CD8-positive, alpha-beta memory T cell (primary cell): ENCODE measurements at regions of chr16 and their contacts with region 1.

Region 1: GRCh38 chr16:67822511-67822910 is 15.8 kb downstream of the TSNAXIP1 start:
- DNase-seq: no peak
- H3K4me3 ChIP-seq: no peak overlapping the region
- H3K4me3 Mint-ChIP-seq: no peak overlapping the region
- H3K27ac ChIP-seq: no peak overlapping the region
- H3K27ac Mint-ChIP-seq: peak overlapping the region in 1 of 8 donors; percentile 47
- H3K4me1 ChIP-seq: no peaks in the 10 kb centered on the region
- H3K4me1 Mint-ChIP-seq: no peaks in the 10 kb centered on the region
- H3K27me3 ChIP-seq: no peaks in the 10 kb centered on the region
- H3K27me3 Mint-ChIP-seq: no peaks in the 10 kb centered on the region

Region 2: GRCh38 chr16:67210069-67210937 is 612.2 kb before region 1 on chr16:
- CTCF ChIA-PET with region 1: no interaction called
- POLR2A ChIA-PET with region 1: interaction called, 13 read pairs
- DNase-seq: peak in 1 of 5 donors; percentile 42
- H3K4me3 ChIP-seq: no peak overlapping the region
- H3K4me3 Mint-ChIP-seq: no peak overlapping the region
- H3K27ac ChIP-seq: no peak overlapping the region
- H3K27ac Mint-ChIP-seq: no peak overlapping the region
- H3K4me1 ChIP-seq: no peaks in the 10 kb centered on the region
- H3K4me1 Mint-ChIP-seq: no peaks in the 10 kb centered on the region
- H3K27me3 ChIP-seq: no peaks in the 10 kb centered on the region
- H3K27me3 Mint-ChIP-seq: peaks cover 0 to 2% of the 10 kb centered on the region in 2 donors

Region 3: DNA sequence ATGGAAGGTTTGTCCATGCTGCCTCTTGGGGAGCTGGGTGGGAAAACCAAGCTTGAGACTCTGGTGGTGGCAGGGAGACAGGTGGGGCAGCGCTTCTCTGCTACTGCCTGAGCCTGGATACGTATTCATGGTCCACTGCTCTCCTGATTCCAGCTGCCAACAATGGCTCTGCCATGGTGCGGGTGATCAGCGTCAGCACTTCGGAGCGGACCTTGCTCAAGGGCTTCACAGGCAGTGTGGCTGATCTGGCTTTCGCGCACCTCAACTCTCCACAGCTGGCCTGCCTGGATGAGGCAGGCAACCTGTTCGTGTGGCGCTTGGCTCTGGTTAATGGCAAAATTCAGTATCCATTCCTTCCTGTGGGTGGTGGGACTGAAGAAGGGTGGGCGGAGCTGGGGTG is 54.6 kb after region 1 on chr16:
- CTCF ChIA-PET with region 1: no interaction called
- POLR2A ChIA-PET with region 1: no interaction called
- DNase-seq: no peak
- H3K4me3 ChIP-seq: no peak overlapping the region
- H3K4me3 Mint-ChIP-seq: no peak overlapping the region
- H3K27ac ChIP-seq: no peak overlapping the region
- H3K27ac Mint-ChIP-seq: peak overlapping the region in 1 of 8 donors; percentile 17
- H3K4me1 ChIP-seq: peaks cover 35% of the 10 kb centered on the region
- H3K4me1 Mint-ChIP-seq: peaks cover 33 to 41% (median 37%) of the 10 kb centered on the region in 3 donors
- H3K27me3 ChIP-seq: no peaks in the 10 kb centered on the region
- H3K27me3 Mint-ChIP-seq: no peaks in the 10 kb centered on the region